HAP-1 (cell line): ENCODE measurements at regions of chr19 and their contacts with region 1.

Region 1: GRCh38 chr19:48271531-48272151 is 1.8 kb downstream of the ZNF114 start:
- DNase-seq: peak; percentile 88 to 89
- H3K4me3 ChIP-seq: peak overlapping the region; percentile 49
- H3K4me1 ChIP-seq: peaks cover 3% of the 10 kb centered on the region; the same call in 1 of the 2 replicates
- H3K27me3 ChIP-seq: no peaks in the 10 kb centered on the region

Region 2: DNA sequence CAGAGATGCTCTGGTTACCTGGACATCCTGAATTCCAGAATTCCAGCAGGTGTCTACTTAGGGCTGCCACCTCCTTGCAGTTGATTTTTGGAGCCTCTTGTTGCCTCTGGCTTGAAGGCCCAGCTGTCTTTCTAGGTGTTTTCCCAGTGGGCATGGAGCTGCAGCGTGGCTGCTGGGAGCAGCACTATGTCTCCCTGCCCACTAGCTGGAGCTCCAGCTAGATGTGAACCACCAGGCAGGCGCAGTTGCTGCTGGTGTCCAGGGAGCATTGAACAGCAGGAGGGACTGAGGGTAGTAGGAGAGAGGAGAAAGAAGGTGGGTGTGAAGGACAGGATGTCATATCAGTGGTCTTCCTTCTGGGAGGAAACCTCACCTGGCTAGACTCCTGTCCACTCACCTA is 503.0 kb before region 1 on chr19:
- in situ Hi-C with region 1: no loop called
- DNase-seq: no peak
- H3K4me3 ChIP-seq: no peak overlapping the region
- H3K4me1 ChIP-seq: no peaks in the 10 kb centered on the region
- H3K27me3 ChIP-seq: no peaks in the 10 kb centered on the region

Region 3: GRCh38 chr19:48582168-48582567 is 310.5 kb after region 1 on chr19:
- in situ Hi-C with region 1: loop called (anchors 5 kb)
- DNase-seq: no peak
- H3K4me3 ChIP-seq: no peak overlapping the region
- H3K4me1 ChIP-seq: peaks cover 7% of the 10 kb centered on the region
- H3K27me3 ChIP-seq: no peaks in the 10 kb centered on the region